ENCODE measurements at regions of chr1 and their contacts with region 1.

Region 1: DNA sequence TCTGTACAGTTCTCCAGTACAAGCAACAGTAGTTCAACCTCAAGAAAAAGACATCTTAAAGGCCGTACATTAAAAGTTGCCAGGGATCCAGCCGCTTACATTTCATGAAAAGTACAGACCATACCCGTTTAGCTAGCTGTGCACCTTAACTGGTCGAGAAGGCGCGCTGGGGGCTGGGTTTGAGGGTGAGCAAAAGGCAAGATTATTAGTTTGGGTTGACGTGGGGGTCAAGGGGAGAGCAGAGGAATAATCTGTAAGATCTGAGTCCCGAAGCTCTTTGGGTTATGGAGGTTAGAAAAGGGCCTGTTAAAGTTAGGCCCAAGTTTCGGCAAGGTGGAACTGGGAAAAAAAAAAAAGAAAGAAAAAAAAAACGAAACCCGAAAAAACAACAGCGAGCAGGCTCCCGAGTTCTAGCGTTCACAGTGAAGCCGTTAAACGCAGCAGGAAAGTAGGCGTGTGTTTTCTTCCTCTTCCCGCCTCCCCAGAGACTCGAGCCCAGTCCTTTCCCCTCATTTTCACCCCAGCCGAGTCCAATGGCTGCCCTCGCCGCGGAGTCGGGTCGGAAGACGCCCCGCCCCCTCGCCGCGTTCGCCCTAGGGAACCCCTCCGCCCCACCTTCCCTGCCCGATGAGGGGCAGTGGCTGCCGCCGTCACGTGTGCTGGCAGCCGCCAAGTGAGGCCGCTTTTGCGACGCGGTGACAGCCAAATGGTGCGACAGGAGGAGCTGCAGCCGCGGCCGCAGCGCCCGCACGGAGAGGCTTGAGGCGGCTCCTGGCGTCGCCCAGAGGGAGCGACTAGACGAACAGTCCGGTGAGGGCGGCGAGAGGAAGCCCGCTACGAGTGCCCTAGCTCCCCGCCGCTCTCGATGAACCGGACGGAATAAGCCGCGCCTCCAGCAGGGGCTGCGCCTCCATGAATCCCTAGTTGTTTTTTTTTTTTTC is at the start of gene PKN2:
- H3K4me3 Mint-ChIP-seq: peak within 1 kb of the TSS; percentile 99
- H3K27ac Mint-ChIP-seq: peak within 1 kb of the TSS; percentile 97
- H3K4me1 Mint-ChIP-seq: peaks cover 16% of the 10 kb centered on the region
- H3K27me3 Mint-ChIP-seq: no peaks in the 10 kb centered on the region

Region 2: DNA sequence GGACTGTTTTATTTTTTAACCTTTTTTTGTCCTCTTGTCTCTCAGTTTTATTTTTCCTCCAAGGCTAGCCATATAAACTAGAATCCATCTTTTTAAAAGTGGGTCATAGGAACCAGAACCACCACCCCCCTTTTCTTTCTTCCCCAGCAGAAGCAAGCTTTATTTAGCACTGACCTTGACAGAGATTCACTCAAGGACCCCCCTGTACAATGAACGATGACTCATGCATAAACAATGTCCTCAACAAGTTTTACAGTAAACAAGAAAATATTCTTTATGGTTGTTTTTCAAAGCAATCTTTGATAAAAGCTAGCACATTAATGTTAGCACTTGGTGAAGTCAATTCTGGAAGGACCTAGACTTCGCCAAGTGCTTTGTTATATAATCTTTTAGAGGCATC is 14.3 kb after region 1 on chr1:
- intact Hi-C with region 1: loop called (anchors 2 kb)
- H3K4me3 Mint-ChIP-seq: no peak overlapping the region
- H3K27ac Mint-ChIP-seq: peak overlapping the region; percentile 67
- H3K4me1 Mint-ChIP-seq: peaks cover 54% of the 10 kb centered on the region
- H3K27me3 Mint-ChIP-seq: no peaks in the 10 kb centered on the region

Region 3: GRCh38 chr1:88729297-88729696 is 45.5 kb after region 1 on chr1:
- intact Hi-C with region 1: loop called (anchors 2 kb)
- H3K4me3 Mint-ChIP-seq: no peak overlapping the region
- H3K27ac Mint-ChIP-seq: peak overlapping the region; percentile 63
- H3K4me1 Mint-ChIP-seq: peaks cover 36% of the 10 kb centered on the region
- H3K27me3 Mint-ChIP-seq: no peaks in the 10 kb centered on the region